ENCODE measurements at regions of chr15 and their contacts with region 1.

Region 1: DNA sequence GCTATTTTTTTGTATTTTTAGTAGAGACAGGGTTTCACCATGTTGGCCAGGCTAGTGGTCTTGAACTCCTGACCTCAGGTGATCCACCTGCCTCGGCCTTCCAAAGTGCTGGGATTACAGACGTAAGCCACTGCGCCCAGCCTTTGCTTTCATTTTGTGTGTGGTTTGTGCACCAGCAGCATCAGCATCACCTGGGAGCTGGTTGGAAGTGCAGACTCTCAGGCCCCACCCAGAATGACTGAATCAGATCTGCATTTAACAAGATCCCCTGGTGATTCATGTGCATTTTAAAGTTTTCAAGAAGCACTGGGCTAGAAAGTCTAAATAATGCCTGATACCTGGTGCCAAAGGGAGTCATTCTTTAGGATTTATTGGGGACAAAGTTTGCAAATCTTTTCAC is 73.4 kb upstream of the BNIP2 start:
- DNase-seq: no peak
- H3K4me3 ChIP-seq: no peak overlapping the region
- H3K27ac ChIP-seq: no peak overlapping the region
- H3K4me1 ChIP-seq: no peaks in the 10 kb centered on the region
- CTCF ChIP-seq: no peak

Region 2: GRCh38 chr15:59594493-59594942 is 168.0 kb before region 1 on chr15:
- CTCF ChIA-PET with region 1: no interaction called
- POLR2A ChIA-PET with region 1: interaction called, 13 read pairs
- intact Hi-C with region 1: no loop called
- DNase-seq: no peak
- H3K4me3 ChIP-seq: no peak overlapping the region
- H3K27ac ChIP-seq: no peak overlapping the region
- H3K4me1 ChIP-seq: no peaks in the 10 kb centered on the region
- CTCF ChIP-seq: no peak

Measured in OCI-LY7 (cell line).